ENCODE measurements at regions of chr2 and their contacts with region 1.

Region 1: DNA sequence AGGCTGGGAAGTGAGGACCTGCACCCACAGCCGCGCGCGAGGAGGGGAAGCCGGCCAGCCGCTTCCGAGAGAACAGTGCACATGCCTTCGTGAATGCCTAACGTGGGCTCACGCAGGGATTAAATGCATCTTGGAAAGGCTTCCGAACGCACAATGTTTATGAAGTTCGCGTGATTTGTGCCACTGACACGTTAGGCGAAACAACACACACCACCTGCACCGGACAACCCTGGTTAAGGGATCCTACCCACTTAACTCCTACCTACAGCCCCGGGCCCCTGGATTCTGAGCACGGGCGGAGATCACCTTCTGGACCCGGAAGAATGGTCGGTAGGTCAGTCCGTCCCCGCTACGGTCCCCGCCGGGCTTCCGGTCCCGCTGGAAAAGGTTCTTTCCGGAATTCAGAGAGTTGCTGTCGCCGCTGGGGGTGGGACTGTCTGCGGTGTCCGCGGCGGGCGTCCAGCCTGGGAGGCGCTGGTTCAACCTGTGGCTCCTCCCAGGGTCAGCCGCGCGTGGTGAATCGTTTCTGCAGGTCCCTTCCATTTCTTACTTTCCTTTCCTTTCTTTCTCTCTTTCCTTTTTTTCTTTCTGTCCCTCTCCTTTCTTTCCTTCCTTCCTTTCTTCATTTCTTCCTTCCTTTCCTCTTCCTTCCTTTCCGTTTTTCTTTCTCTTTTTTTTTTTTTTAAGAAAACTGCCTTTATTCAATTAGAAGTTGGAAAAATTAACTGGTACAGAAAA is at the start of gene MTIF2:
- DNase-seq: peak; percentile 98 to 99
- H3K4me3 ChIP-seq: peak within 1 kb of the TSS; percentile 52
- H3K4me3 Mint-ChIP-seq: peak within 1 kb of the TSS; percentile 87
- H3K27ac Mint-ChIP-seq: peak within 1 kb of the TSS; percentile 95
- H3K4me1 ChIP-seq: peaks cover 5% of the 10 kb centered on the region; the same call in 1 of the 2 replicates
- H3K4me1 Mint-ChIP-seq: peaks cover 7% of the 10 kb centered on the region
- H3K27me3 ChIP-seq: no peaks in the 10 kb centered on the region
- H3K27me3 Mint-ChIP-seq: no peaks in the 10 kb centered on the region
- CTCF ChIP-seq: peak in 1 of 2 experiments; percentile 35
- total RNA-seq, gene MTIF2: 37.6 and 42.7 TPM in 2 replicates

Region 2: DNA sequence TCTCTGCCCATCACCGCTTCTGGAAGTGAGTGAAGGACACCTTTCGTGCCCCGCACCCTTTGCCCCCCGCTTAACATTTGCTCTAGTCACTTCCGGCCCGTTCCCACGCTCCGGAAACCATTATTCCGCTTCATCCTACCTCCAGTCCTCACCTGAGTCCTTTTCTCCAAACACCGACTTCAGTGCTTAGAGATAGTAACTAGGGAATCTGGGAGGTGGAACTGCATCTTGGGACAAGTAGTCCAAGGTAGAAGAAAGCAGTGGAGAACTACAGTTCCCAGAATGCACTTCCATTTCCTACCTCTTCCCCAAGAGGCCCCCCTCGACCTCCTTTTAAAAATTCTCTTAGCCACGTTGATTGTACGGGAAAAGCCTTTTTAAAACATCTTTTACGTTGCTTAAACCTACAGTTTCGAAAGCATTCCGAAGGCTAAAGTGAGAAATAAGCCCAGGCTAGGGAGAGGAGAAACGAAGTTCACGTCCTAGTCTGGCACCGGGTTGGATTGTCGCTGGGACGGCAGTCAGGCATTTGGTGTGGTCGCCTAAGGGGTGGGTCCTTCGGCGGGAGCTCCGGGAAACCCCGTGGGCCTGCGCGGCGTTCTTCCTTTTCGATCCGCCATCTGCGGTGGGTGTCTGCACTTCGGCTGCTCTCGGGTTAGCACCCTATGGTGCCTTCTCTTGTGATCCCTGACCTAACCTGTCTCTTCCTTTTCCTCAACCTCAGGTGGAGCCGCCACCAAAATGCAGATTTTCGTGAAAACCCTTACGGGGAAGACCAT is 36.8 kb before region 1 on chr2 and contains the starts of genes CLHC1 and RPS27A:
- CTCF ChIA-PET with region 1: no interaction called
- POLR2A ChIA-PET with region 1: interaction called, 6 read pairs
- intact Hi-C with region 1: loop called (anchors 1 kb)
- DNase-seq: peak; percentile 93 to 97
- H3K4me3 ChIP-seq: peak within 1 kb of the TSS; percentile 96
- H3K4me3 Mint-ChIP-seq: peak within 1 kb of the TSS; percentile 85
- H3K27ac Mint-ChIP-seq: peak within 1 kb of the TSS; percentile 94
- H3K4me1 ChIP-seq: peaks cover 38% of the 10 kb centered on the region
- H3K4me1 Mint-ChIP-seq: peaks cover 36% of the 10 kb centered on the region
- H3K27me3 ChIP-seq: no peaks in the 10 kb centered on the region
- H3K27me3 Mint-ChIP-seq: no peaks in the 10 kb centered on the region
- CTCF ChIP-seq: no peak
- total RNA-seq, gene CLHC1: 12.6 and 13.4 TPM in 2 replicates
- total RNA-seq, gene RPS27A: 1,305 and 1,418 TPM in 2 replicates

Region 3: GRCh38 chr2:55247025-55247424 is 22.1 kb before region 1 on chr2:
- CTCF ChIA-PET with region 1: no interaction called
- POLR2A ChIA-PET with region 1: no interaction called
- intact Hi-C with region 1: loop called (anchors 1 kb)
- DNase-seq: peak; percentile 62 to 66
- H3K4me3 ChIP-seq: no peak overlapping the region
- H3K4me3 Mint-ChIP-seq: no peak overlapping the region
- H3K27ac Mint-ChIP-seq: peak overlapping the region; percentile 2
- H3K4me1 ChIP-seq: peaks cover 12% of the 10 kb centered on the region
- H3K4me1 Mint-ChIP-seq: peaks cover 20% of the 10 kb centered on the region
- H3K27me3 ChIP-seq: no peaks in the 10 kb centered on the region
- H3K27me3 Mint-ChIP-seq: no peaks in the 10 kb centered on the region
- CTCF ChIP-seq: no peak

Region 4: GRCh38 chr2:55282110-55282917 is 13.2 kb after region 1 on chr2:
- CTCF ChIA-PET with region 1: no interaction called
- POLR2A ChIA-PET with region 1: no interaction called
- intact Hi-C with region 1: loop called (anchors 1 kb)
- DNase-seq: peak; percentile 91 to 93
- H3K4me3 ChIP-seq: peak overlapping the region; percentile 80
- H3K4me3 Mint-ChIP-seq: peak overlapping the region; percentile 86
- H3K27ac Mint-ChIP-seq: peak overlapping the region; percentile 90
- H3K4me1 ChIP-seq: peaks cover 9% of the 10 kb centered on the region
- H3K4me1 Mint-ChIP-seq: peaks cover 7% of the 10 kb centered on the region
- H3K27me3 ChIP-seq: no peaks in the 10 kb centered on the region
- H3K27me3 Mint-ChIP-seq: no peaks in the 10 kb centered on the region
- CTCF ChIP-seq: no peak

Region 5: GRCh38 chr2:55311444-55311870 is 42.4 kb after region 1 on chr2:
- CTCF ChIA-PET with region 1: no interaction called
- POLR2A ChIA-PET with region 1: no interaction called
- intact Hi-C with region 1: no loop called
- DNase-seq: no peak
- H3K4me3 ChIP-seq: no peak overlapping the region
- H3K4me3 Mint-ChIP-seq: no peak overlapping the region
- H3K27ac Mint-ChIP-seq: no peak overlapping the region
- H3K4me1 ChIP-seq: no peaks in the 10 kb centered on the region
- H3K4me1 Mint-ChIP-seq: no peaks in the 10 kb centered on the region
- H3K27me3 ChIP-seq: no peaks in the 10 kb centered on the region
- H3K27me3 Mint-ChIP-seq: no peaks in the 10 kb centered on the region
- CTCF ChIP-seq: no peak

Region 6: GRCh38 chr2:55419679-55420438 is 150.8 kb after region 1 on chr2 and contains the start of gene CCDC88A:
- CTCF ChIA-PET with region 1: no interaction called
- POLR2A ChIA-PET with region 1: no interaction called
- intact Hi-C with region 1: loop called (anchors 5 kb)
- DNase-seq: peak; percentile 96 to 97
- H3K4me3 ChIP-seq: peak within 1 kb of the TSS; percentile 74
- H3K4me3 Mint-ChIP-seq: peak within 1 kb of the TSS; percentile 93
- H3K27ac Mint-ChIP-seq: no peak within 1 kb of the TSS
- H3K4me1 ChIP-seq: no peaks in the 10 kb centered on the region; the same call in 1 of the 2 replicates
- H3K4me1 Mint-ChIP-seq: peaks cover 13% of the 10 kb centered on the region
- H3K27me3 ChIP-seq: no peaks in the 10 kb centered on the region
- H3K27me3 Mint-ChIP-seq: peaks cover 11% of the 10 kb centered on the region
- CTCF ChIP-seq: peak; percentile 6 to 31
- total RNA-seq, gene CCDC88A: 6.4 and 7.7 TPM in 2 replicates

Region 7: DNA sequence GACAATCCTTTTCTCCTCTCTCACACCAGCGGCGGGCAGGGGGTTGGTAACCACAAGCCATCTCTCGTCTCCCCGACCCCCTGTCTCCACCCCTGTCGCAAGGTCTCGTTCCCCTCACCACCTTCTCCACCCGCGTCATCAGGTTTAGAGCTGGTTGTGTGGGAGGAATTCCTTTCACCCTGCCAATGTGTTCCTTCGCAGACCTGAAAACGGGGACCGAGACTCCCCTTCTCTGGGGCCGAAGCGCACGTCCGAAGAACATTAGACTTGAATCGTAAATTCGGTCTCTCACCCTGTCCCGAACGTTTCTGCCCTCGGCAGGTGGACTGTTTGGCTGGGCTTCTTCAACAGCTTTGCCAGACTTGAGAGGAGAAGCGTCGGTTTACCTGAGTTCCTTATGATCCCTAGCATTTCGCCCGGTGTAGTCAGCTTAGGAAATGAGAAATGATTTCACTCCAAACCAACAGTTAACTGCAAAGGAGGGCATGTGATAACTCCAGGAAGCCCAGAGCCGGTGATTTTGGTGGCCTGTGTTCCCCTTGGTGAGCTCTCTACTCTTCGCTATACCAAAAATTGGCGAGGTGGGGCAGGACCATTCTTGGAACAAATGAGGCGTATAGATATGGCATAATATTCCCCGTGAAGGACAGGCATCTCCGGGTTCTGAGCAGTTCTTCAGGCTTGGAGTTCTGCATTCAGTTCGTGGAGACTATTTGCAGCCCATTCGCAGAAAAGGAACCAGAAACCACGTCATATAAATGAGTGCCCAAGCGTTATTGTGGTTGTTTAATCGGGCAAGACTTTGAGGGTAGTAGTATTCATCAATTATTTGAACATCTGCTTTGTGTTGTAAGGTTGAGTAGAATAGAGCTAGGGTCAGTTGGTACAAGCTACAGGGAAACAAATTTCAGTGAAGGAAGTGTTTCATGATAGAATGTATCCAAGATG is 251.1 kb after region 1 on chr2:
- CTCF ChIA-PET with region 1: no interaction called
- POLR2A ChIA-PET with region 1: no interaction called
- intact Hi-C with region 1: loop called (anchors 1 kb)
- DNase-seq: peak in 1 of 2 experiments; percentile 44
- H3K4me3 ChIP-seq: peak overlapping the region; percentile 65
- H3K4me3 Mint-ChIP-seq: peak overlapping the region; percentile 94
- H3K27ac Mint-ChIP-seq: peak overlapping the region; percentile 88
- H3K4me1 ChIP-seq: no peaks in the 10 kb centered on the region
- H3K4me1 Mint-ChIP-seq: peaks cover 7% of the 10 kb centered on the region
- H3K27me3 ChIP-seq: no peaks in the 10 kb centered on the region
- H3K27me3 Mint-ChIP-seq: no peaks in the 10 kb centered on the region
- CTCF ChIP-seq: no peak

Measured in Caco-2 (cell line).